Dendritic cell treated with granulocyte-macrophage colony-stimulating factor and Interleukin-4, amounts not matched to agents 40 ng/mL and 50 ng/mL, for 4 days (primary cell): ENCODE measurements at regions of chr17 and their contacts with region 1.

Region 1: DNA sequence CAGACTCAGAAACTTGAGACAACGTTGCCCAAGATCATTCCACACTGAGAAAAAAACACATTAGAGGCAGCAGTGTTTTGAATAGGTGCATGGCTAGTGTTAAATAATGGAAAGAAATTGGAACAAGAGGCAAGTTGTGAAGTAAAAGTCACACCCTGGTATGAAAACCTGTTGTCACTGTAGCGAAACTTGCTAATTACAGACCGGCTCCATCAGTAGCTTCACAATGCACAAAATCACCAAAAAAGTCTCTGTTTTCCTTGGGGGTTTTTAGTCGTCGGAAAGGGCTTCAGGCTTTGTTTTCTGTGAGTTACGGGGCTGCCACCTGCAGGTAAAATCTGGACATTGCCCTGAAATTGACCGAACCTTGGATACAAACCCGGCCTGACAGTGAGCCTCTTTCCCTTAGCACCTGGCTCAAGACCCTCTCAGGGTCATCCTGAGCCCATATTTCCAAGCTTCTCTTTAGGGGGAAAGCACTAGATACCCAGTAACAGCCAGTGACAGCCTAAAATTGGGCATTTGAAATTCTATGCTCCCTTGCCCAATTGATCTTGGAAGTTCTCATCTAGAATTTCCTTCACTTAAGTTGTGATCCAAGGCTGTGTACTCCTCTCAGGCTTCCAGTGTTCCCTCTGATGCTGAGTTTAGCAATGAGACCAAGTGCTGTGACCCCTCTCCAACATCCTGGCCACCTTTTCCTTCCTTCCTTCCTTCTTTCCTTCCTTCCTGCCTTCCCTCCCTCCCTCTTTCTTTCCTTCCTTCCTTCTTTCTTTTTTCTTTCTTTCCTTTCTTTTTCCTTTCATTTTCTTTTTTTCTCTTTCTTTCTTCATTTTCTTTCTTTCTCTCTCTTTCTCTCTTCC is 7.2 kb upstream of the GRB2 start:
- H3K4me3 Mint-ChIP-seq: peak overlapping the region; percentile 37
- H3K27ac Mint-ChIP-seq: peak overlapping the region; percentile 81
- H3K4me1 Mint-ChIP-seq: peaks cover 48% of the 10 kb centered on the region
- H3K27me3 Mint-ChIP-seq: no peaks in the 10 kb centered on the region

Region 2: DNA sequence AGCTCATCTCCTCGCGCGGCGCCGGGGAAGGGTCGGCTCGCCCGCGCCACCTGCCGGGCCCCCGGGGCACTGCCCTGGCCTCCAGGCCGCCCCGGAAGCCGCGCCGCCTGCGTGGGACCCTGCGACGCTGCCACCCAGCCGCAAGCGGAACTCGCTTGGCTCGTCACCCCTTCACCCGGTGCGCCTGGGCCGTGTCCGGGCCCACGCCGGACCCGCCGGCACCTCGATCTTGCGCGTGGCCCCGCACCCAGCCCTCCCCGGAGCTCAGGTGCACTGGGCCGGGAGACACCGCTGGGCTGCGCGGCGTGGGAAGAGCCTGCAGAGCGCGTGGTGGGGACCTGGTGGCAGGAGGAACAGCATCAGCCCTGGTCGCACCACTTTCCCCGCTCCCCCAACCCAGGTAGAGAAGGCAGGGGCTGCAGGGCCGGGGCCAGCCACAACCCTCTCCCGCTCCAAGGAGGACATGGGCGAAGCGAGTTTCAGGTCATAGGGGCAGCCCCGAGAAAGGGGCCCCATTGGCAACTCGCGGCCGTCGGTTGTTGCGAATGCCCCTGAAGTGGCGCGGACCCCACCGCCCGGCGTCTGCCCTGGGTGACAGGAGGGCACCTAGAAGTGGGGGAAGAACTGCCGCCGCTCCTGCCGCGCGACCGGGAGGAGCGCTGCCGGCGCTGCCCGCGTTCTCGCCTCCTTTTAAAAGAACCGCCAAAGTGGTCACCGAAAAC is 141.3 kb before region 1 on chr17:
- intact Hi-C with region 1: loop called (anchors 5 kb)
- H3K4me3 Mint-ChIP-seq: peak overlapping the region; percentile 81
- H3K27ac Mint-ChIP-seq: peak overlapping the region; percentile 96
- H3K4me1 Mint-ChIP-seq: peaks cover 74% of the 10 kb centered on the region
- H3K27me3 Mint-ChIP-seq: no peaks in the 10 kb centered on the region

Region 3: GRCh38 chr17:75325827-75326225 is 86.9 kb before region 1 on chr17:
- intact Hi-C with region 1: no loop called
- H3K4me3 Mint-ChIP-seq: peak overlapping the region; percentile 46
- H3K27ac Mint-ChIP-seq: peak overlapping the region; percentile 78
- H3K4me1 Mint-ChIP-seq: peaks cover 49% of the 10 kb centered on the region
- H3K27me3 Mint-ChIP-seq: no peaks in the 10 kb centered on the region

Region 4: GRCh38 chr17:75371339-75371738 is 41.3 kb before region 1 on chr17:
- intact Hi-C with region 1: no loop called
- H3K4me3 Mint-ChIP-seq: no peak overlapping the region
- H3K27ac Mint-ChIP-seq: peak overlapping the region; percentile 28
- H3K4me1 Mint-ChIP-seq: peaks cover 71% of the 10 kb centered on the region
- H3K27me3 Mint-ChIP-seq: no peaks in the 10 kb centered on the region